ENCODE measurements at regions of chr13 and their contacts with region 1.

Region 1: DNA sequence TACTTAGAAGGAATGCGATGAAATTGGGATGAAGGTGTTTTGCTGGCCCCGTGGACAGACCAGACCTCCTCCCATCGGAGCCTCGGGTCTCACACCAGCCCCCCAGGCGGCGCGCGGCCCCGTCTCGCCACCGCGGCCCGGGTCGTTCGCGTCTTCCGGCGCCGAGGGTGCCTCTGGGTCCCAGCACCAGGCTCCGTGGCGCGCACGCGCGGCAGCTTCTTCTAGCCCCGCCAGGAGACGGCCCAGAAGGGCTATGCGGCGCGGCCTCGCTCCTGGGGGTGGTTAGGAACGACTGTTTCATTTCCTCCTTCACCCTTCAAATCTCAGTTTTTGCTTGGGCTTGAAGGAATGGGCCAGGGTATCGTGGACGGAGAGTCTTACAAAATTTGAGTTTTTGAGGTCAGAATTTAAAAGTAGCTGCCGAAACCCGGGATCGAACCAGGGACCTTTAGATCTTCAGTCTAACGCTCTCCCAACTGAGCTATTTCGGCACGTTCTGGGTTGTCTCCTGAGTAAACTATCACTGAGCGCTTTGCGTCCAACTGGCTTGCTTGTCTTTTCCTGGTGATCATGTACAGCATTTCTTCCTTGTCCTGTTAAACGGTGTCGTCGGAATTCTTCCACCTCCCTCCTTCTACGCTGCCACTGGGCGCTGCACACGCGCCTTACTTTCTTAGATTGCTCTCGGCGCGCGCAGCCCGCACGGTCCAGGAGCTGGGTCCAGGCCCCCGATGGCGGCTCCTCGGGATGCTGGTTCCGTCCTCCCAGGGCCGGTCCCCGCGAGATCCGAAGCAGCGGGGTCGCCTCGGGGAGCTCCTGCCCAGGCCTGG is 46.5 kb downstream of the TGDS start:
- DNase-seq: peak; percentile 77 to 95 (median 89)
- H3K4me3 ChIP-seq: peak overlapping the region; percentile 57 to 97 (median 81)
- H3K27ac ChIP-seq: peak overlapping the region; percentile 72 to 99 (median 97)
- H3K27me3 ChIP-seq: no peaks in the 10 kb centered on the region
- CTCF ChIP-seq: peak in 16 of 56 donors; percentile 3 to 51 (median 18)

Region 2: GRCh38 chr13:94435604-94436226 is 113.7 kb before region 1 on chr13:
- intact Hi-C with region 1: loop called in 1 of 2 experiments (anchors 5 kb)
- DNase-seq: no peak
- H3K4me3 ChIP-seq: no peak overlapping the region
- H3K27ac ChIP-seq: no peak overlapping the region
- H3K27me3 ChIP-seq: no peaks in the 10 kb centered on the region
- CTCF ChIP-seq: peak; percentile 55 to 88 (median 74)

Region 3: DNA sequence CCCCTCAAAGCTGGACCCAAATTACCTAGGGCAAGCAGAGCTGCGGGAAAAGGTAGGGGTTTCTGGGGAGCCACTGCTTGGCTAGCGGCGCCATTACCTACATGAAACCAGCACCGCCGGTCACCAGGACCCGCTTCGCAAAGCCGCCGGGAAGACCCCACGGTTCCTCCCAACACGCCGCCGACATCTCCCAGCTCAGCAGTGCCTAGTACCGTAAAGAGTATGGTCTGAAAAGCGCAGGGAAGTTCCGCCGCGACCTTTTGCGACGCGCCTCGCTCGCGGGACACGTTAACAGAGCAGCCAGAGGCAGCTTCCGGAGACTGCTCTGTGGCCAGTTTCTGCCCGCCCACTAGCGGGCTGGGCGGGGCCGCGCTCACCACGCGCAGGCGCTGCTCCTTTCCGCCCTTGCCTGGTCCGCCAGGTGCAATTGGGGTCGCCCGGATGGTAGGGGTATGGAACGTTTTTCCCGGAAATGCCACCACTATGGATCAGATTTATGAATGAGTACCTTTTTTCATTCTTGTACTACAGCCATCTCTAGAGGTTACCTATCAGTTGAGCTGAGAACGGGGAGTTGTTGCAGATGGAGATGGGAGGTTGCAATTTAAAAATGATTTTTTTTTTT is 46.6 kb after region 1 on chr13 and contains the start of gene TGDS:
- intact Hi-C with region 1: loop called (anchors 2 kb)
- DNase-seq: peak; percentile 72 to 94 (median 86)
- H3K4me3 ChIP-seq: peak within 1 kb of the TSS; percentile 60 to 97 (median 83)
- H3K27ac ChIP-seq: peak within 1 kb of the TSS in 58 of 59 donors; percentile 24 to 92 (median 74)
- H3K27me3 ChIP-seq: no peaks in the 10 kb centered on the region
- CTCF ChIP-seq: peak in 43 of 56 donors; percentile 12 to 64 (median 46)
- total RNA-seq, gene TGDS: 2.8 to 9.4 (median 5.8) TPM

Region 4: GRCh38 chr13:94601446-94602431 is 52.3 kb after region 1 on chr13 and contains the start of gene GPR180:
- intact Hi-C with region 1: loop called in 1 of 2 experiments (anchors 2 kb)
- DNase-seq: peak; percentile 85 to 99 (median 97)
- H3K4me3 ChIP-seq: peak within 1 kb of the TSS; percentile 63 to 98 (median 90)
- H3K27ac ChIP-seq: peak within 1 kb of the TSS; percentile 2 to 94 (median 83)
- H3K27me3 ChIP-seq: no peaks in the 10 kb centered on the region
- CTCF ChIP-seq: peak in 19 of 56 donors; percentile 10 to 44 (median 20)
- total RNA-seq, gene GPR180: 7.3 to 15.0 (median 11.3) TPM

Region 5: DNA sequence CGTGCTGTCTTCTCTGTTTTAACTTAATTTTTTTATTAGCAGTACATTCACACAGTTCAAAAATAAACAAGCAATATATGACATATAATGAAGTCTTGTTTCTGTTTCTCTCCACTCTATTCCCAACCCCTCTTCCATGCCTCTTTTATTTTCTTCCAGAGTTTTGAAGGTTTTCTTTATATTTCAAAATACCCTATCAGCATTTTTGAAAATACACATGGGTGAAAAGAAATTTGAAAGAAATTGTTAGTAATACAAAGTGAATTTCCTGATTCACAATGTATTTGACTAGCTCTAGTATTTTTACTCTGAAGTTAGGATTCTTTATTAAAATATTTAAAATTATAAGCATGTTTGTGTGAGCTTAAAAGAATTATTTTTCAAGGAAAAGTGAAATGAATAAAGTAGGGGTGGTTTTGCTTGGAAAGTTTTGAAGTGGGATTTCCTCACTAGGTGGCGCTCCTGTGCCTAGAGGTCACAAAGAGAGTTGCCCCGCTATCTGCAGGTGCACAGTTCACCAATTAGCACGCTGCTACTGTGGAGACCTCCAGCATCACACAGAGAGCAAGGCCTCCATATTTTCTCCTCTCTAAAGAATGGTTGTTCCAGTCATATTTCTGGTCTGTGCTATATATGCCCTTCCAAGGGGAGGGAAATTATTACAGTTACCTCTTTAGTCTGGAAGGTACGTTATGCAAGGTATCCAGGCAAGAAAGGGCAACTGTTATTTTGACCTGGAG is 125.3 kb after region 1 on chr13:
- intact Hi-C with region 1: no loop called
- DNase-seq: peak in 4 of 10 donors; percentile 13 to 42 (median 32)
- H3K4me3 ChIP-seq: no peak overlapping the region
- H3K27ac ChIP-seq: no peak overlapping the region
- H3K27me3 ChIP-seq: peaks cover 0 to 11% (median 0%) of the 10 kb centered on the region in 45 donors
- CTCF ChIP-seq: peak in 55 of 56 donors; percentile 32 to 85 (median 67)

Measured in dorsolateral prefrontal cortex (tissue), 120 donors.